Heart right ventricle (tissue), 16 donors: ENCODE measurements at regions of chr11 and their contacts with region 1.

Region 1: DNA sequence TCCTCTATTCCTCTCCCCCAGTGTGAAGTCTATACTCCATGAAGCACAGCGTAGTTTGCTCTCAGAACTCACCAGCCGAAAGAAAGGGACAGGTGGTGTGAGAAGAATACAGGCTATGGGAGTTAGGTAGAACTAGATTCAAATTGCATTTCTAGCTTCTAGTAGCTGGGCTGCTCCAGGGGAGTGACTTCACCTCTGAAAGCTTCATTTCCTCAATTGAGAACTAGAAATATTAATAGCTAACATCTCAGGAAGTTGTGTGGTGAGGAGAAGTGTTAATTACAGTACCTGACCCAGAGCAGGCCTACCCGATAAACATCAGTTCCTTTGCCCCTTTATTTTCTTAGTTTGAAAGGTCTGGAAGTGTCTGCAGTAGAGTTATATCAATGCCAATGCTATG is 484.7 kb upstream of the TENM4 start:
- DNase-seq: no peak
- ATAC-seq: no peak
- H3K4me3 ChIP-seq: no peak overlapping the region
- H3K27ac ChIP-seq: no peak overlapping the region
- H3K4me1 ChIP-seq: peaks cover 0 to 4% (median 0%) of the 10 kb centered on the region in 9 donors
- H3K27me3 ChIP-seq: no peaks in the 10 kb centered on the region
- CTCF ChIP-seq: no peak

Region 2: GRCh38 chr11:79227757-79228755 is 697.5 kb before region 1 on chr11:
- intact Hi-C with region 1: no loop called
- DNase-seq: no peak
- ATAC-seq: no peak
- H3K4me3 ChIP-seq: no peak overlapping the region
- H3K27ac ChIP-seq: no peak overlapping the region
- H3K4me1 ChIP-seq: peaks cover 0 to 5% (median 0%) of the 10 kb centered on the region in 9 donors
- H3K27me3 ChIP-seq: no peaks in the 10 kb centered on the region
- CTCF ChIP-seq: no peak

Region 3: GRCh38 chr11:79570104-79570503 is 355.5 kb before region 1 on chr11:
- intact Hi-C with region 1: no loop called
- DNase-seq: no peak
- ATAC-seq: no peak
- H3K4me3 ChIP-seq: no peak overlapping the region
- H3K27ac ChIP-seq: no peak overlapping the region
- H3K4me1 ChIP-seq: no peaks in the 10 kb centered on the region
- H3K27me3 ChIP-seq: no peaks in the 10 kb centered on the region
- CTCF ChIP-seq: no peak

Region 4: GRCh38 chr11:79864882-79865281 is 60.7 kb before region 1 on chr11:
- intact Hi-C with region 1: loop called in 1 of 10 experiments (anchors 10 kb)
- DNase-seq: no peak
- ATAC-seq: no peak
- H3K4me3 ChIP-seq: no peak overlapping the region
- H3K27ac ChIP-seq: no peak overlapping the region
- H3K4me1 ChIP-seq: no peaks in the 10 kb centered on the region
- H3K27me3 ChIP-seq: no peaks in the 10 kb centered on the region
- CTCF ChIP-seq: no peak

Region 5: DNA sequence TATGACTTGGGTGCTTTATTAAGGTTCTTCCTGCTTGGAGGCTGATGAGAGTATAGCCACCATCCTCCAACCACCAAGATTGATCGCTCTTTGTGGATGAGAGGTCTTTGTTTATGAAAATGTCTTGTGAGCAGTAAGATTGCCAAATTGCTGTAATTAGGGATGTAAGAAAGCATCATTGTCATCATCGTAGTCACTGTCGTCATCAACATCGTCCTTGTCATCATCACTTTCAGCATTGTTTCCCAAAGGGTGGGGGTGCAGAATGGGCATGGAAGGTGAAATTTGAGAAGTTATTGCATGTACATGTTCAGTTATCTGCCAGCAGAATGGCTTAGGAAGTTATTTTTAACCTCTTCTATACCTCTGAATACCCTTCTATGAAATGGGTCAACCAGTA is 45.3 kb before region 1 on chr11:
- intact Hi-C with region 1: no loop called
- DNase-seq: no peak
- ATAC-seq: no peak
- H3K4me3 ChIP-seq: no peak overlapping the region
- H3K27ac ChIP-seq: no peak overlapping the region
- H3K4me1 ChIP-seq: no peaks in the 10 kb centered on the region
- H3K27me3 ChIP-seq: no peaks in the 10 kb centered on the region
- CTCF ChIP-seq: no peak

Region 6: GRCh38 chr11:79982185-79982584 is 56.6 kb after region 1 on chr11:
- intact Hi-C with region 1: loop called in 1 of 10 experiments (anchors 10 kb)
- DNase-seq: no peak
- ATAC-seq: no peak
- H3K4me3 ChIP-seq: no peak overlapping the region
- H3K27ac ChIP-seq: no peak overlapping the region
- H3K4me1 ChIP-seq: no peaks in the 10 kb centered on the region
- H3K27me3 ChIP-seq: no peaks in the 10 kb centered on the region
- CTCF ChIP-seq: no peak